ENCODE measurements at regions of chr9 and their contacts with region 1.

Region 1: DNA sequence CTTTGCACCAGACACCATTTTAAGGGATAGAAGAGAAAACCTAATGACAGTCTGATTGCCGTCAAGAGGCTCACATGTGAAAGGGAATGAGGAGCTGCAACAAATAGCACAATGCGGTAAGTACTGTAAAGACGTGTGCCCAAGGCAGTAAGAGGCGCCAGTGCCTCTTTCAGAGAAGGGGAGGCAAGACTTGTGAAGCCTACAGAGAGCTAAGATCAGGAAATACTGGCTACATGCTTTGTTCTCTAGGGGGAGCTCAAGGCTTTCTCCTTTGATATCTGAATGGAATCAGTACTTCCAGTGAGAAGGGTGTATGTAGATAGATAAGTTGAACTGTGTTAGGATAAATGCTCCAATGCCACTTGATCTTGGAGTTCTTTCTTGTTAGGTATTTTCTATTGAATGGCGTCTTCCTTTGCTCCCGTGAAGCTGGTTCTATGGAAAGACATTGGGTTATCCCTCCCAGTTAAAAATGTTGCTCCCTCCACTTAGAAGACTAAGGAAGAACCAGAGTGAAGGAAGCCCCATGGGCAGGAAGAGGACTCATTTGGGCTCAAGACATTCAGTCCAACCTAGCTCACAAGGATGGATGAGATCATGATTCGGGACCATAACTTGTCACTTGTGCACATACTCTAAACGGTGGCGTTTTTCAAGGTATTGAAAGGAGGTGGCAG is 23.5 kb upstream of the ALDOB start:
- DNase-seq: no peak
- H3K4me3 ChIP-seq: no peak overlapping the region
- H3K27ac ChIP-seq: no peak overlapping the region
- H3K4me1 ChIP-seq: no peaks in the 10 kb centered on the region
- H3K27me3 ChIP-seq: no peaks in the 10 kb centered on the region
- CTCF ChIP-seq: peak in 5 of 6 experiments; percentile 32 to 85 (median 59)
- POLR2A ChIP-seq: no peak

Region 2: DNA sequence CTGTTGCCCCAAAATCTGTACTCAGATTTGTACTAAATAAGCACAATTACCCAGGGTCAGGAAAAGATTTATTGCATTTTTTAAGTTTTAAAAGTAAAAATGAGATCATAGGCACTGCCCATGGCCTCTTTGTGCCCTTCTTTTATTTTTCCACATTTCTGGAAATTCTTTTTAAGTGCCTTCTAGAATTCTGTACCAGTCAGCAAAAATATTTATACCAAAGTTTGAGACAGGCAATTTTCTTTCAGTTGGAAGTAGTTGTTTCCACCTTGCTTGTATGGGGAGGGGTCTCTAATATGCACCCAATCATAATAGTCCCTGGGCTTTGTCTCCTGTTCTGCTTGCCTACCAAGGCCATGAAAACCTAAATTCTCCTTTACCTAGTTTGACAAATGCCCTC is 68.9 kb after region 1 on chr9:
- intact Hi-C with region 1: loop called (anchors 2 kb)
- DNase-seq: no peak
- H3K4me3 ChIP-seq: no peak overlapping the region
- H3K27ac ChIP-seq: no peak overlapping the region
- H3K4me1 ChIP-seq: no peaks in the 10 kb centered on the region
- H3K27me3 ChIP-seq: no peaks in the 10 kb centered on the region
- CTCF ChIP-seq: no peak
- POLR2A ChIP-seq: no peak

Region 3: GRCh38 chr9:101848485-101848919 is 389.4 kb after region 1 on chr9:
- intact Hi-C with region 1: no loop called
- DNase-seq: peak in 1 of 2 donors; percentile 5
- H3K4me3 ChIP-seq: no peak overlapping the region
- H3K27ac ChIP-seq: no peak overlapping the region
- H3K4me1 ChIP-seq: no peaks in the 10 kb centered on the region
- H3K27me3 ChIP-seq: no peaks in the 10 kb centered on the region
- CTCF ChIP-seq: no peak
- POLR2A ChIP-seq: no peak

Measured in thyroid gland (tissue), 4 donors.